ENCODE measurements at regions of chr6 and their contacts with region 1.

Region 1: GRCh38 chr6:157764178-157765033 is 58.6 kb upstream of the SNX9 start:
- DNase-seq: peak; percentile 57 to 93 (median 80)
- ATAC-seq: peak; percentile 51
- H3K4me3 ChIP-seq: peak overlapping the region; percentile 10 to 23
- H3K4me3 Mint-ChIP-seq: peak overlapping the region; percentile 74
- H3K27ac ChIP-seq: peak overlapping the region; percentile 27 to 61
- H3K27ac Mint-ChIP-seq: peak overlapping the region; percentile 95
- H3K4me1 ChIP-seq: peaks cover 69% of the 10 kb centered on the region
- H3K4me1 Mint-ChIP-seq: peaks cover 73% of the 10 kb centered on the region
- H3K27me3 ChIP-seq: no peaks in the 10 kb centered on the region
- H3K27me3 Mint-ChIP-seq: no peaks in the 10 kb centered on the region
- CTCF ChIP-seq: no peak

Region 2: DNA sequence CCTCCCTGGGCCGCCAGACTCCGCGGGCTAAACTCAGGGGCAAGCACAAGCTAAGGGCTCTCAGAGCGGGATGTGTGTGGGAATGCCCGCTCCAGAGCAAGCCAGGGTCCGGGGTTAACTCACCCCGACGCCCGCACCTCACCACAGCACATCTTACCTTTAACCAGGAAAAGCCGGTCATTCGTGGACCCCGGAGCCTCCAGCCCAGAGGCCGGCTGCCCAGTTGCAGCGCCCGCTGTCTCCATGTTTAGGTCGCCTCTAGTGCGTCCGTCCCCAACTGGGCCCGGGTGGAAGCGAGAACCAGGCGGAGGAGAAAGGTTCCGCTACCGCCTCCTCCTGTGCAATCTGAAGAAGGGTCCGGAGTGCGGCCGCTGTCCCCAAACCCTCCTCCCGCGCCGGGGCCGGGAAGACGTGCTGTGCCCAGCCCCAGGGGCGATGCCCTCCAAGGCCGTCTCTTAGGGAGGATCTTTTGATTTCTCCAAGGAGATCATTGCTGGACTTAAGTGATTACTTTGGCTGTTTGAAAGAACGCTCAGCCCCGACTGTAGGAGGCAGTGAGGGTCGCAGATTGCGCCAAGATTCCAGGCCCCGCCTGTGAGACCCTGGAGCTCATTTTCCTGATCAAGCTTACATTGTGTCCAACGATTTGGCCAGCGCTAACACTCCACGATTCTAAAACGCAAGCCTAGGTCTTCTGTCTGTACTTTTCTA is 441.0 kb before region 1 on chr6 and contains the start of gene TMEM242:
- CTCF ChIA-PET with region 1: no interaction called
- POLR2A ChIA-PET with region 1: no interaction called
- intact Hi-C with region 1: loop called in 1 of 2 experiments (anchors 5 kb)
- DNase-seq: peak; percentile 78 to 95 (median 87)
- ATAC-seq: peak; percentile 95
- H3K4me3 ChIP-seq: peak within 1 kb of the TSS; percentile 93 to 98
- H3K4me3 Mint-ChIP-seq: peak within 1 kb of the TSS; percentile 88
- H3K27ac ChIP-seq: peak within 1 kb of the TSS; percentile 66 to 75
- H3K27ac Mint-ChIP-seq: peak within 1 kb of the TSS; percentile 86
- H3K4me1 ChIP-seq: peaks cover 8% of the 10 kb centered on the region
- H3K4me1 Mint-ChIP-seq: peaks cover 22% of the 10 kb centered on the region
- H3K27me3 ChIP-seq: no peaks in the 10 kb centered on the region
- H3K27me3 Mint-ChIP-seq: peaks cover 5% of the 10 kb centered on the region
- CTCF ChIP-seq: peak; percentile 24
- total RNA-seq, gene TMEM242: 13.8 to 14.0 TPM

Region 3: GRCh38 chr6:157379656-157380454 is 384.6 kb before region 1 on chr6:
- CTCF ChIA-PET with region 1: no interaction called
- POLR2A ChIA-PET with region 1: no interaction called
- intact Hi-C with region 1: loop called in 1 of 2 experiments (anchors 5 kb)
- DNase-seq: peak; percentile 76 to 92 (median 89)
- ATAC-seq: peak; percentile 79
- H3K4me3 ChIP-seq: peak overlapping the region; percentile 92 to 96
- H3K4me3 Mint-ChIP-seq: peak overlapping the region; percentile 83
- H3K27ac ChIP-seq: peak overlapping the region; percentile 68 to 80
- H3K27ac Mint-ChIP-seq: peak overlapping the region; percentile 64
- H3K4me1 ChIP-seq: peaks cover 10% of the 10 kb centered on the region
- H3K4me1 Mint-ChIP-seq: peaks cover 20% of the 10 kb centered on the region
- H3K27me3 ChIP-seq: no peaks in the 10 kb centered on the region
- H3K27me3 Mint-ChIP-seq: no peaks in the 10 kb centered on the region
- CTCF ChIP-seq: no peak

Region 4: GRCh38 chr6:157873735-157874344 is 109.4 kb after region 1 on chr6:
- CTCF ChIA-PET with region 1: interaction called, 233 read pairs
- POLR2A ChIA-PET with region 1: interaction called, 9 read pairs
- intact Hi-C with region 1: loop called in 1 of 2 experiments (anchors 2 kb)
- DNase-seq: peak; percentile 65 to 91 (median 81)
- ATAC-seq: peak; percentile 76
- H3K4me3 ChIP-seq: no peak overlapping the region
- H3K4me3 Mint-ChIP-seq: no peak overlapping the region
- H3K27ac ChIP-seq: no peak overlapping the region
- H3K27ac Mint-ChIP-seq: no peak overlapping the region
- H3K4me1 ChIP-seq: peaks cover 25% of the 10 kb centered on the region
- H3K4me1 Mint-ChIP-seq: peaks cover 29% of the 10 kb centered on the region
- H3K27me3 ChIP-seq: no peaks in the 10 kb centered on the region
- H3K27me3 Mint-ChIP-seq: no peaks in the 10 kb centered on the region
- CTCF ChIP-seq: peak; percentile 84

Region 5: GRCh38 chr6:157885211-157885788 is 120.9 kb after region 1 on chr6:
- CTCF ChIA-PET with region 1: interaction called, 233 read pairs
- POLR2A ChIA-PET with region 1: interaction called, 3 read pairs
- intact Hi-C with region 1: loop called (anchors 1 kb)
- DNase-seq: peak in 8 of 9 experiments; percentile 19 to 87 (median 60)
- ATAC-seq: peak; percentile 81
- H3K4me3 ChIP-seq: no peak overlapping the region
- H3K4me3 Mint-ChIP-seq: peak overlapping the region; percentile 36
- H3K27ac ChIP-seq: peak overlapping the region; percentile 75 to 89
- H3K27ac Mint-ChIP-seq: peak overlapping the region; percentile 93
- H3K4me1 ChIP-seq: peaks cover 32% of the 10 kb centered on the region
- H3K4me1 Mint-ChIP-seq: peaks cover 49% of the 10 kb centered on the region
- H3K27me3 ChIP-seq: no peaks in the 10 kb centered on the region
- H3K27me3 Mint-ChIP-seq: no peaks in the 10 kb centered on the region
- CTCF ChIP-seq: no peak

Region 6: DNA sequence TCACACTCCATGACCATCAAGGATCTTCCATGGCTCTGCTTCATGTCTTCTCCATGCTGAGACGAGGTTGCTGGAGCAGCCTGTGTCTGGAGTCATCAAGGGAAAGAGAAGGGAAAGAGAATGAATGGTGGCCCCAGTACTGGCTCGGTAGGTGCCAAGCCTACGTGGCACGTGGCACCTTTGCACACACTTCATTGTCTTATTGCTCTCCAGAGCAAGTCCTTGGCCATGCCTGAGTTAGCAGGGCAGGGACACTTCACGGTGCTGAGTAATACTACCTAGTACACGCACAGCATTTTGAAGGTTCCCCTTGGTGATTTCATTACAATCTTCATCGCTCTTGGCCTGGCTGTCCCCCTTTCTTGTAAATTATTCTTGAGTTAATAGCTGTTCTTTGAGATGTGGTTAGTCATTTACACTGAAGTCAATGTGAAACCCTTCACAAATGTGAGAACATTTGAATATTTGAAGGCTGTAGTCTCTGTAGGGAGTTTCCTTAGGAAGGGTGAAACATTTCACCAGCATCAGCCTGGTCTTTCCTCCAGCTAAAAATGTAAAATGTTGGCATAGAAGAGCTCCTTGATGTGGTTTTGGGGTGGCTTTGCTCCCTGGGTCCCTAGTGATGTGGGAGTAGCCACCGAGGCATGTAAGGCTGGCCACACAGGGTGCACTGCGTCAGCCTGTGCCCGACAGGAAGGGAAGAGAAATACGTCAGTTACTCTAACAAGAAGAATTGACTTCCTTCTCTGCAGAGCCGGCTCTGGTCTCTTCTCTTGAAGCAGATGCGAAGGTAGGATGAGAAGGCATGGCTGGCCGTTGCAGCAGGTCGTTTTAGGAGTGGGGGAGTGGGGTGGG is 885.1 kb after region 1 on chr6 and contains the start of gene SYTL3:
- CTCF ChIA-PET with region 1: no interaction called
- POLR2A ChIA-PET with region 1: no interaction called
- intact Hi-C with region 1: loop called in 1 of 2 experiments (anchors 5 kb)
- DNase-seq: peak; percentile 50 to 97 (median 76)
- ATAC-seq: peak; percentile 61
- H3K4me3 ChIP-seq: peak within 1 kb of the TSS in 1 of 2 experiments; percentile 43
- H3K4me3 Mint-ChIP-seq: peak within 1 kb of the TSS; percentile 77
- H3K27ac ChIP-seq: peak within 1 kb of the TSS; percentile 53 to 76
- H3K27ac Mint-ChIP-seq: peak within 1 kb of the TSS; percentile 85
- H3K4me1 ChIP-seq: peaks cover 51% of the 10 kb centered on the region
- H3K4me1 Mint-ChIP-seq: peaks cover 64% of the 10 kb centered on the region
- H3K27me3 ChIP-seq: no peaks in the 10 kb centered on the region
- H3K27me3 Mint-ChIP-seq: no peaks in the 10 kb centered on the region
- CTCF ChIP-seq: no peak
- total RNA-seq, gene SYTL3: 38.2 to 44.6 TPM